ENCODE measurements at regions of chr17 and their contacts with region 1.

Region 1: GRCh38 chr17:38868817-38869525 is 887 bp upstream of the LASP1 start:
- DNase-seq: peak; percentile 77 to 92 (median 88)
- ATAC-seq: peak; percentile 51
- H3K4me3 ChIP-seq: peak overlapping the region; percentile 99 to 100
- H3K4me3 Mint-ChIP-seq: peak overlapping the region; percentile 99
- H3K27ac ChIP-seq: peak overlapping the region; percentile 79 to 84
- H3K27ac Mint-ChIP-seq: peak overlapping the region; percentile 97
- H3K4me1 ChIP-seq: peaks cover 40% of the 10 kb centered on the region
- H3K4me1 Mint-ChIP-seq: peaks cover 52% of the 10 kb centered on the region
- H3K27me3 ChIP-seq: no peaks in the 10 kb centered on the region
- H3K27me3 Mint-ChIP-seq: no peaks in the 10 kb centered on the region
- CTCF ChIP-seq: no peak

Region 2: GRCh38 chr17:38752119-38752929 is 116.6 kb before region 1 on chr17 and contains the start of gene PSMB3:
- CTCF ChIA-PET with region 1: no interaction called
- POLR2A ChIA-PET with region 1: interaction called, 10 read pairs
- intact Hi-C with region 1: loop called (anchors 1 to 2 kb)
- DNase-seq: peak; percentile 90 to 100 (median 95)
- ATAC-seq: peak; percentile 87
- H3K4me3 ChIP-seq: peak within 1 kb of the TSS; percentile 88 to 99
- H3K4me3 Mint-ChIP-seq: peak within 1 kb of the TSS; percentile 96
- H3K27ac ChIP-seq: peak within 1 kb of the TSS; percentile 70 to 85
- H3K27ac Mint-ChIP-seq: peak within 1 kb of the TSS; percentile 97
- H3K4me1 ChIP-seq: peaks cover 53% of the 10 kb centered on the region
- H3K4me1 Mint-ChIP-seq: peaks cover 54% of the 10 kb centered on the region
- H3K27me3 ChIP-seq: peaks cover 21 to 31% of the 10 kb centered on the region in 2 experiments
- H3K27me3 Mint-ChIP-seq: peaks cover 19% of the 10 kb centered on the region
- CTCF ChIP-seq: no peak
- total RNA-seq, gene PSMB3: 53.6 to 64.2 TPM

Region 3: GRCh38 chr17:38853292-38854219 is 15.4 kb before region 1 on chr17 and contains the start of gene RPL23:
- CTCF ChIA-PET with region 1: interaction called, 31 read pairs
- POLR2A ChIA-PET with region 1: interaction called, 52 read pairs
- intact Hi-C with region 1: loop called (anchors 1 kb)
- DNase-seq: peak; percentile 78 to 98 (median 91)
- ATAC-seq: peak; percentile 78
- H3K4me3 ChIP-seq: peak within 1 kb of the TSS; percentile 56 to 74
- H3K4me3 Mint-ChIP-seq: peak within 1 kb of the TSS; percentile 93
- H3K27ac ChIP-seq: peak within 1 kb of the TSS; percentile 84 to 94
- H3K27ac Mint-ChIP-seq: peak within 1 kb of the TSS; percentile 99
- H3K4me1 ChIP-seq: peaks cover 22% of the 10 kb centered on the region
- H3K4me1 Mint-ChIP-seq: peaks cover 46% of the 10 kb centered on the region
- H3K27me3 ChIP-seq: no peaks in the 10 kb centered on the region
- H3K27me3 Mint-ChIP-seq: no peaks in the 10 kb centered on the region
- CTCF ChIP-seq: no peak
- total RNA-seq, gene RPL23: 2,036 to 2,052 TPM

Region 4: GRCh38 chr17:38891051-38891840 is 22.3 kb after region 1 on chr17:
- CTCF ChIA-PET with region 1: interaction called, 7 read pairs
- POLR2A ChIA-PET with region 1: interaction called, 15 read pairs
- intact Hi-C with region 1: no loop called
- DNase-seq: peak in 3 of 9 experiments; percentile 44 to 70 (median 45)
- ATAC-seq: peak; percentile 65
- H3K4me3 ChIP-seq: peak overlapping the region in 1 of 2 experiments; percentile 29
- H3K4me3 Mint-ChIP-seq: peak overlapping the region; percentile 58
- H3K27ac ChIP-seq: peak overlapping the region; percentile 18 to 59
- H3K27ac Mint-ChIP-seq: peak overlapping the region; percentile 91
- H3K4me1 ChIP-seq: peaks cover 89% of the 10 kb centered on the region
- H3K4me1 Mint-ChIP-seq: peaks cover 85% of the 10 kb centered on the region
- H3K27me3 ChIP-seq: no peaks in the 10 kb centered on the region
- H3K27me3 Mint-ChIP-seq: no peaks in the 10 kb centered on the region
- CTCF ChIP-seq: no peak

Region 5: GRCh38 chr17:38943607-38944006 is 74.6 kb after region 1 on chr17:
- CTCF ChIA-PET with region 1: no interaction called
- POLR2A ChIA-PET with region 1: no interaction called
- intact Hi-C with region 1: no loop called
- DNase-seq: no peak
- ATAC-seq: no peak
- H3K4me3 ChIP-seq: no peak overlapping the region
- H3K4me3 Mint-ChIP-seq: no peak overlapping the region
- H3K27ac ChIP-seq: no peak overlapping the region
- H3K27ac Mint-ChIP-seq: no peak overlapping the region
- H3K4me1 ChIP-seq: no peaks in the 10 kb centered on the region
- H3K4me1 Mint-ChIP-seq: peaks cover 1% of the 10 kb centered on the region
- H3K27me3 ChIP-seq: no peaks in the 10 kb centered on the region
- H3K27me3 Mint-ChIP-seq: no peaks in the 10 kb centered on the region
- CTCF ChIP-seq: no peak

Region 6: DNA sequence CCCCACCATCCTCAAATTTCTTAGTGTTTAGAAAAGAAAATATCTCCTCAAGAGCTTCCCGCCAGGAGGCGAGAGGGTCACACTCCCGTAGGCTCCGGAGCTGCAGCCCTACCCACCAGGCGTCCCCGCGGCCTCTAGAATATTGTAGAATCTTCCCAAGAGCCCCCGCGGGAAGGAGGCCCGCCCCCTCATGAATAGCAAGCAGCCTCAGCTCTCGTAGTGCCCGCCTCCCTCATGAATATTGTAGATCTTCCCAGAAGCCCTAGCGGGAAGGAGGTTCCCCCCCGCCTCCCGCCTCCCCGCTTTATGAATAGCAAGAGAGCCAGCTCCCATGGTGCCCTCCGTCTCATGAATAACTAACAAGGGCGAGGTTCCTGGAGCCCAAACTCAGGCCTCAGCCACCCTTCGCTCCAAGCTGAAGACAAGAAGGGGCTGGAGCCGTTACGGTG is 98.3 kb after region 1 on chr17 and contains the start of gene FBXO47:
- CTCF ChIA-PET with region 1: interaction called, 7 read pairs
- POLR2A ChIA-PET with region 1: interaction called, 4 read pairs
- intact Hi-C with region 1: loop called (anchors 2 kb)
- DNase-seq: peak; percentile 61 to 93 (median 82)
- ATAC-seq: peak; percentile 98
- H3K4me3 ChIP-seq: peak within 1 kb of the TSS; percentile 18 to 53
- H3K4me3 Mint-ChIP-seq: peak within 1 kb of the TSS; percentile 81
- H3K27ac ChIP-seq: peak within 1 kb of the TSS; percentile 42 to 65
- H3K27ac Mint-ChIP-seq: peak within 1 kb of the TSS; percentile 89
- H3K4me1 ChIP-seq: peaks cover 9% of the 10 kb centered on the region
- H3K4me1 Mint-ChIP-seq: peaks cover 19% of the 10 kb centered on the region
- H3K27me3 ChIP-seq: no peaks in the 10 kb centered on the region
- H3K27me3 Mint-ChIP-seq: no peaks in the 10 kb centered on the region
- CTCF ChIP-seq: no peak
- total RNA-seq, gene FBXO47: not detected

Region 7: DNA sequence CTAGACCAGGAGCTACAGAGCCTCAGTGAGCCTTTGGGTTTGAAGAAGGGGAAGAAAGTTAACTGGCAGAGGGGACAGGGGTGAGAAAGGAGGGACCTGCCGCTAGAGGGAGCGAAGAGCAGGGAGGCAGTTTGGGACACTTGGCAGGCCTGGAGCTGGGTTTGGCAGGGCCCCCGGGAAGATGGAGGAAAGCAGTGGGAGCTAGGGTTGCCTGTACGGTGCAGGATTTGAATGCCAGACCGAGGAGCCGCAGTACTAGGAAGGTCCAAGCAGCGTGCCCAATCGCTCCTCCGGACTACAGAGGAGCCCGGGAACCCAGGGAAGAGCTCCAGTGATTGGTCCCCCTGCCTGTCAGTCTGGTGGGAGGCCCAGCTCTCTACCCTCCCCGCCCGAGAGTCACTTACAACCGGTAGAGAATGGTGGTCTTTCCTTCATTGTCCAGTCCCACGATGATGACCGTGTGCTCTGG is 295.7 kb after region 1 on chr17:
- CTCF ChIA-PET with region 1: no interaction called
- POLR2A ChIA-PET with region 1: no interaction called
- intact Hi-C with region 1: no loop called
- DNase-seq: peak; percentile 53 to 90 (median 74)
- ATAC-seq: peak; percentile 89
- H3K4me3 ChIP-seq: peak overlapping the region; percentile 68 to 95
- H3K4me3 Mint-ChIP-seq: peak overlapping the region; percentile 91
- H3K27ac ChIP-seq: peak overlapping the region in 1 of 2 experiments; percentile 21
- H3K27ac Mint-ChIP-seq: peak overlapping the region; percentile 67
- H3K4me1 ChIP-seq: peaks cover 20% of the 10 kb centered on the region
- H3K4me1 Mint-ChIP-seq: peaks cover 33% of the 10 kb centered on the region
- H3K27me3 ChIP-seq: peaks cover 0 to 3% of the 10 kb centered on the region in 2 experiments
- H3K27me3 Mint-ChIP-seq: peaks cover 11% of the 10 kb centered on the region
- CTCF ChIP-seq: peak; percentile 80

Measured in CD8-positive, alpha-beta T cell (primary cell).